ENCODE measurements at regions of chr4 and their contacts with region 1.

Region 1: GRCh38 chr4:112312610-112313239 is 15.6 kb downstream of the ALPK1 start:
- DNase-seq: peak; percentile 48
- ATAC-seq: peak; percentile 75
- H3K4me3 ChIP-seq: peak overlapping the region; percentile 11 to 50 (median 25)
- H3K4me3 Mint-ChIP-seq: no peak overlapping the region
- H3K27ac ChIP-seq: peak overlapping the region; percentile 68 to 75
- H3K27ac Mint-ChIP-seq: no peak overlapping the region
- H3K4me1 ChIP-seq: peaks cover 17 to 26% of the 10 kb centered on the region in 2 donors
- H3K4me1 Mint-ChIP-seq: peaks cover 20% of the 10 kb centered on the region
- H3K27me3 ChIP-seq: no peaks in the 10 kb centered on the region
- H3K27me3 Mint-ChIP-seq: no peaks in the 10 kb centered on the region
- CTCF ChIP-seq: no peak

Region 2: DNA sequence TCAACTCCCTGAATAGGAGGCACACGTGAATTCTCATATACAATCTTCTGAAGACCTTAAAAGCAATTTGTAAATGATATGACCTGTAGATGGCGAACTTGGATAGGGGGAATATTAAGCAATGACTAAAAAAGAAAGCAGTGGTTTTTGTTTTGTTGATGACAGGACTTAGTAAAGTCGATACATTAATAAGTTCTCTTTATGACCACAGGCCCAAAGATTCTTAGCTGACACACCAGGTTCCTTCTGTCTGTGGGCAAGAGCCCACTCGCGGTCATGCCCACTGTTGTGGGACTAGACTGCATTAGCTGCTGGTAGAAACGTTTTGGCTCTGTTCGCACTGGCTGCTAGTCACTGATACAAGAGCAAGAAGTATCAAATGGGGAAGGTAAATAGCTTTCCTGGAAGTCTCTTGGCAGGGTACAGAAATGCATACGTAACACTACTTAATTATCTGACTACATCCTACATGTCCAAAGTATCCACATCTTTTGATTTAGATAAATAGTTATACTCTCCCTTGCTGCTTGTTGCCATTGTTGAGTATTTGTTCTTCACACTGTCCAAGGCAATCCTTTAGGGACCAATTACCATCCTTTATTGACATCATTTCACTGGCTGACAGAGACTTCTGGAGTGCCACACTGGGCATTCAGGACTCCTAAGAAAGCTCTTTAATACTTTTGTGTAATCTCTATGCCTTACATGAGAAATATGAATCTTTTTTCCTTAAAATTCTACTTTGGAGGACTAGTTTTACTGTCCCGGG is 15.4 kb after region 1 on chr4:
- CTCF ChIA-PET with region 1: interaction called, 13 read pairs
- POLR2A ChIA-PET with region 1: no interaction called
- intact Hi-C with region 1: no loop called
- DNase-seq: peak; percentile 70
- ATAC-seq: peak; percentile 47
- H3K4me3 ChIP-seq: no peak overlapping the region
- H3K4me3 Mint-ChIP-seq: peak overlapping the region; percentile 49
- H3K27ac ChIP-seq: no peak overlapping the region
- H3K27ac Mint-ChIP-seq: no peak overlapping the region
- H3K4me1 ChIP-seq: no peaks in the 10 kb centered on the region
- H3K4me1 Mint-ChIP-seq: peaks cover 5% of the 10 kb centered on the region
- H3K27me3 ChIP-seq: no peaks in the 10 kb centered on the region
- H3K27me3 Mint-ChIP-seq: no peaks in the 10 kb centered on the region
- CTCF ChIP-seq: peak; percentile 75

Region 3: DNA sequence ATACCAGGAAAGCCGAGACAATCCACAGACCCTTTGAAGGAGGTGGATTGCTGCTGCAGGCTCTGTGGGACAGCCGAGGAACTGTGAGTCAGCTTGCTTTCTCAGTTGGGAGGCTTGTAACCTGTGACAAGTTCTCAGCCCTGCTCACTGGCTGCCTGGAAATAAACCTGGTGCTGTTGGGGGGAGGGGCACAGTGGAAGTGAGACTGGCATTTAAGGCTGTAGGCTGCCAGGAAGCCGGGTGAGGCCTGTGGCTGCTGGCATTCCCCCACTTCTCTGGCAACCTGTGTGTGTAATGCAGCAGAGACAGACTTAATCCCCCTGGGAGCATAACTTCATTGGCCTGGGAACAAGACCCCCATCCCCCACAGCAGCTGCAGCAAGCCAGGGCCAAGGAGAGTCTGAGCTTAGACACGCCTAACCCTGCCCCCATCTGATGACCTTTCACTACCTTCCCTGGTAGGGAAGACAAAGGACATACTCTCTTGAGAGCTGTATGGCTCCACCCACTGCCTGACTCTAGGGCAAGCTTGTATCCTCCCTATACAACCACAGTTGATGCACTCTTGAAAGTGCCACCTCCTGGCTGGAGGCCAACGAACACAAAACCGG is 48.6 kb after region 1 on chr4:
- CTCF ChIA-PET with region 1: no interaction called
- POLR2A ChIA-PET with region 1: no interaction called
- intact Hi-C with region 1: no loop called
- DNase-seq: peak; percentile 39
- ATAC-seq: peak; percentile 78
- H3K4me3 ChIP-seq: no peak overlapping the region
- H3K4me3 Mint-ChIP-seq: no peak overlapping the region
- H3K27ac ChIP-seq: no peak overlapping the region
- H3K27ac Mint-ChIP-seq: peak overlapping the region; percentile 41
- H3K4me1 ChIP-seq: peaks cover 0 to 2% of the 10 kb centered on the region in 2 donors
- H3K4me1 Mint-ChIP-seq: peaks cover 8% of the 10 kb centered on the region
- H3K27me3 ChIP-seq: no peaks in the 10 kb centered on the region
- H3K27me3 Mint-ChIP-seq: no peaks in the 10 kb centered on the region
- CTCF ChIP-seq: no peak